Activated B cell treated with CpG ODN at 0.5 μM for 24 hours (primary cell): ENCODE measurements at regions of chr2 and their contacts with region 1.

Region 1: GRCh38 chr2:64767670-64768468 is 114.2 kb upstream of the SERTAD2 start:
- DNase-seq: peak; percentile 76
- ATAC-seq: peak; percentile 81
- H3K4me3 Mint-ChIP-seq: peak overlapping the region; percentile 88
- H3K27ac Mint-ChIP-seq: peak overlapping the region; percentile 96
- H3K4me1 Mint-ChIP-seq: peaks cover 21% of the 10 kb centered on the region
- H3K27me3 Mint-ChIP-seq: no peaks in the 10 kb centered on the region
- CTCF ChIP-seq: no peak

Region 2: DNA sequence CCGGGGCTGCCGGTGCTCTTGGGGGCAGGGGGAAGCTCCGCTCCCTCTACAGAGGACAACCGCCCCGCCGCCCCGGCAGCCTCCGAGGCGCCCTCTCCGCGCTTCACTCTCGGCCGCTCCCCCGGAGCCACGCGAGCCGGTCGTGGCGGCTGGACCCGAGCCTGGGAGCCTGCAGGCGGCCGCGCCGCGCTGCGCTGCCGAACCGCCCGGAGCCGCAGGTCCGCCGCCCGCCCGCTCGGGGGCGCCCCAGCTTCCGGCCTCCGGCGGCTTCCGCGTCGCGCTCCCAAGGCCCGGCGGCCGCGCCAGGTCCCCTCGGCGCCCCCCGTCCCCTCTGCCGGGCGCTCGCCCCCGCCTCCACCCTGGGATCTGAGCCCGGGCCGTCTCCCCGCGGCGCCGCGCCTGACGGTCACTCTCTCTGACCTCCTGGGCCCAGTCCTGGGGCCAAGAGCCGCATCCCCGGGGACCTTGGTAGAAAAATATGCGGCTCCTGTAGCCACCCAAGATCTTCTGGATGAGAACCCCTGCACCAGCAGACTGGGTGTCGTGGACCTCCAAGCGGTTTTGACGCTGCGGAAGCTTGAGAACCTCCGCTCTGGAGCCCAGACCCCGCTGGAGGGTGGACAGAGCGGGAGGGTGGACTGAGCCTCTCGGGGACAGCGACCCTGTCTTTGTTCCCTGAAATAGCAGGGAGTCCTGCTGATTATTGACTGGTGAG is 158.5 kb before region 1 on chr2:
- CTCF ChIA-PET with region 1: interaction called, 3 read pairs
- POLR2A ChIA-PET with region 1: interaction called, 11 read pairs
- intact Hi-C with region 1: loop called (anchors 1 kb)
- DNase-seq: peak; percentile 82
- ATAC-seq: peak; percentile 71
- H3K4me3 Mint-ChIP-seq: peak overlapping the region; percentile 84
- H3K27ac Mint-ChIP-seq: peak overlapping the region; percentile 77
- H3K4me1 Mint-ChIP-seq: peaks cover 34% of the 10 kb centered on the region
- H3K27me3 Mint-ChIP-seq: no peaks in the 10 kb centered on the region
- CTCF ChIP-seq: no peak

Region 3: DNA sequence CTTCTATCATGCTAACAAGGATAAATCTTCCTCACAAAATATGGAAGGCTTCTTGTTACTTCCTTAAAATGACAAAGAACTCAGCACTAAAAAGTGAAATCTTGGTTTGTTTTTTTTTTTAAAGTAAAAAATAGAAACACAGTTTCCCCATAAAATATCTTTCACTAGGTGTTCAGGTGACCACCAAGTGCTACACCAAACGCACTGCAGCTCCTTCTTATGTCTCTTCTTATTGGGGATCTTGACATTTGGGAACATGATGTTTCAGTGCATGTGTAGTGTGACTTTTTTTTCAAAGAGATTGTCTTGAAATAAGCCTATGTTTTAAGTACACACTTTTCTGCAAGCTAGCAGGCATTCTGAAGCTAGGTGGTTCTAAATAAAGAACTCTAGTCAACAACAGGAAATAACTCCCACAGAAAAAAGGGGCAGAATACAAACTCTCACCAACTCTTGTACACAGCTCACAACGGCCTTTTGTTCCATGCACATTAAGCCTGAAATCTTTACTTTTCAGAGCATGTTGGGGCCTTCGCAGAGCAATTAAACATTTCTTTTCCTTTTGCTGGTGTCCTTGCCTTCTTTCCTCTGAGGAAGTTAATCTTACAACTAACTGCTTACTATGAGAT is 100.9 kb before region 1 on chr2:
- CTCF ChIA-PET with region 1: no interaction called
- POLR2A ChIA-PET with region 1: interaction called, 12 read pairs
- intact Hi-C with region 1: no loop called
- DNase-seq: no peak
- ATAC-seq: peak; percentile 28
- H3K4me3 Mint-ChIP-seq: peak overlapping the region; percentile 3
- H3K27ac Mint-ChIP-seq: peak overlapping the region; percentile 79
- H3K4me1 Mint-ChIP-seq: peaks cover 26% of the 10 kb centered on the region
- H3K27me3 Mint-ChIP-seq: no peaks in the 10 kb centered on the region
- CTCF ChIP-seq: no peak

Region 4: DNA sequence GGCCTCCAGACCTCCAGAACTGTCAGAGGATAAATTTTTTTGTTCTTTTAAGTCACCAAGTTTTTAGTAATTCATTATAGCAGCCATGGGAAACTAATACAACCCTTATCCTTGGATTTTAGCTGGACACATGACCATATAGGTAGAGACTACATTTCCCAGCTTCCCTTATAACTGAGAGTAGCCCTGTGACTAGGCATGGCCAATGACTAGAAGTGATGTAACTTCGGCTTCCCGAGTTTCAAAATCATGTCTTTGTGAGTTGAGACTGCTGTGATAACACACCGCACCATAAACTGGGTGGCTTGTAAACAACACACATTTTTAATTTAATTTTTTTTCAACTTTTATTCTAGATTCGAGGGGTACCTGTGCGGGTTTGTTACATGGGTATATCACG is 19.8 kb after region 1 on chr2:
- CTCF ChIA-PET with region 1: no interaction called
- POLR2A ChIA-PET with region 1: interaction called, 6 read pairs
- intact Hi-C with region 1: loop called (anchors 2 kb)
- DNase-seq: no peak
- ATAC-seq: no peak
- H3K4me3 Mint-ChIP-seq: no peak overlapping the region
- H3K27ac Mint-ChIP-seq: no peak overlapping the region
- H3K4me1 Mint-ChIP-seq: peaks cover 18% of the 10 kb centered on the region
- H3K27me3 Mint-ChIP-seq: no peaks in the 10 kb centered on the region
- CTCF ChIP-seq: no peak

Region 5: DNA sequence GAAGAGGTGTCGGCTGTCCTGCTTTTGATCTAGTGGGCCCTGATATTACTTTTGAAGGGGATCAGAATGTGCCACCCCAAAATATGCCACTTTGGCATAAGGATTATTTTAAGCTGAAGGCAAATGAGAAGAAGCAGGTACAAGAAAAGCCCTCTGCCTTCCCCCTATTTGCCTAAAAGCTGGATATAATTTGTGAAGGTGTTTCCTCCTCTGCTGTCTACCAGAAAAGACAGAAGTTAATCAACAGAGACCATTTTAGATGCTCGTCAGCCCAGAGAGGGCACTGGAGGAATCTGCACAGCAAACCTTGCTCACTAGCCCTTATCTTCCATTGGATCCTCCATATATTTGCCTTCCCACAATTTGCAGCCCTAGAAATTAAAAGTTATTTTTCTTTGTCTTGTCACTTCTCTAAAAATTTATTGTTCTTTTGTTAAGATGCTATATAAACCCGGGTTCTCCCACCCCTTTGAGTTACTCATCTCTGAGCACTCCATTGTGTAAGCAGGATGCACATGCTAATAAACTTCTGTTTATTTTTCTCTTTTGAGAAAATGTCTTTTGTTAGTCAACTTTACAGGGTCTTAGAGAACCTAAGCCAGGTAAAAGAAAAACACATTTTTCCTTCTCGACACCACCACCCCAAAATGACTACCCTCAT is 58.1 kb after region 1 on chr2:
- CTCF ChIA-PET with region 1: interaction called, 6 read pairs
- POLR2A ChIA-PET with region 1: interaction called, 28 read pairs
- intact Hi-C with region 1: loop called (anchors 1 kb)
- DNase-seq: no peak
- ATAC-seq: peak; percentile 22
- H3K4me3 Mint-ChIP-seq: no peak overlapping the region
- H3K27ac Mint-ChIP-seq: peak overlapping the region; percentile 53
- H3K4me1 Mint-ChIP-seq: peaks cover 46% of the 10 kb centered on the region
- H3K27me3 Mint-ChIP-seq: no peaks in the 10 kb centered on the region
- CTCF ChIP-seq: no peak

Region 6: GRCh38 chr2:64865073-64865830 is 97.4 kb after region 1 on chr2:
- CTCF ChIA-PET with region 1: interaction called, 6 read pairs
- POLR2A ChIA-PET with region 1: interaction called, 70 read pairs
- intact Hi-C with region 1: loop called (anchors 1 kb)
- DNase-seq: peak; percentile 76
- ATAC-seq: peak; percentile 56
- H3K4me3 Mint-ChIP-seq: peak overlapping the region; percentile 41
- H3K27ac Mint-ChIP-seq: no peak overlapping the region
- H3K4me1 Mint-ChIP-seq: peaks cover 6% of the 10 kb centered on the region
- H3K27me3 Mint-ChIP-seq: no peaks in the 10 kb centered on the region
- CTCF ChIP-seq: no peak

Region 7: DNA sequence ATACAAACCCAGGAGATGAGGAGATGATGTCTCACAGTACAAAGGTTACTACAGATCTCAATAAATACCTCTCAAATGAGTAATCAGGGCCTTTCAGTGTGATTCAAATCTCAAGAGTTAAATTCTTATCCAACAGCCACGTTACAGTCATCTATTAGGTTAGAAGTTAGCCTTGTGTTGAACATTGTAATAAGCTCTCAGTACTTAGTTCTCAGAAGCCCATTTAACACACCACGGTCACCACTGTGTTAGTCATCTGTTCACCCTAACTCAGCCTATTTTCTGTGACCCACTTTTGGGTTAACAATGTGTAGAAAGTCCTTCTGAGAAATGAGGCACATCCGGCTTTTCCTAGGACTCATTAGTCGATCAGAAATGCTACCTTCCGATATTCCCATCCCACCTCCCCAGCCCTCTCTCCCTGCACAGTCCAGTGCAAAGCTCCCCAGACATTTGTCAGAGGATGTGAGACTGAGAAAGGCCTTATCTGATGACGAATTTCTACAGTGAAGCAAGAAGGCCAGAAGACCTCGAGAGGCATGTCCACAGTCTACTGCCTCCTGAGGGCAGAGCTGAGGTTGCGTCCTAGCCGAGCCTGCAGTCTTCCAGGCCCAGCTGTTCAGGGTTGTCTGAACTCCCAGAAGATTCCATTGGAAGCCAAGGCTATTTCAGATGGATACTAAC is 552.3 kb after region 1 on chr2:
- CTCF ChIA-PET with region 1: no interaction called
- POLR2A ChIA-PET with region 1: no interaction called
- intact Hi-C with region 1: no loop called
- DNase-seq: no peak
- ATAC-seq: no peak
- H3K4me3 Mint-ChIP-seq: no peak overlapping the region
- H3K27ac Mint-ChIP-seq: no peak overlapping the region
- H3K4me1 Mint-ChIP-seq: peaks cover 15% of the 10 kb centered on the region
- H3K27me3 Mint-ChIP-seq: peaks cover 28% of the 10 kb centered on the region
- CTCF ChIP-seq: no peak